ENCODE measurements at regions of chr3 and their contacts with region 1.

Region 1: GRCh38 chr3:23749609-23750008 is 56.1 kb upstream of the UBE2E1 start:
- DNase-seq: no peak
- ATAC-seq: no peak
- H3K4me3 ChIP-seq: no peak overlapping the region
- H3K27ac ChIP-seq: no peak overlapping the region
- H3K4me1 ChIP-seq: peaks cover 6% of the 10 kb centered on the region
- H3K27me3 ChIP-seq: no peaks in the 10 kb centered on the region
- CTCF ChIP-seq: no peak
- POLR2A ChIP-seq: no peak
- RAD21 ChIP-seq: no peak

Region 2: GRCh38 chr3:23662079-23662617 is 87.5 kb before region 1 on chr3:
- CTCF ChIA-PET with region 1: interaction called, 10 read pairs
- POLR2A ChIA-PET with region 1: no interaction called
- dilution Hi-C with region 1: no loop called
- in situ Hi-C with region 1: no loop called
- intact Hi-C with region 1: no loop called
- DNase-seq: peak; percentile 45
- ATAC-seq: peak; percentile 56
- H3K4me3 ChIP-seq: no peak overlapping the region
- H3K27ac ChIP-seq: no peak overlapping the region
- H3K4me1 ChIP-seq: peaks cover 2% of the 10 kb centered on the region; the same call in 1 of the 2 replicates
- H3K27me3 ChIP-seq: peaks cover 1% of the 10 kb centered on the region; the same call in 1 of the 2 replicates
- CTCF ChIP-seq: no peak
- POLR2A ChIP-seq: no peak
- RAD21 ChIP-seq: no peak